ENCODE measurements at regions of chr19 and their contacts with region 1.

Region 1: DNA sequence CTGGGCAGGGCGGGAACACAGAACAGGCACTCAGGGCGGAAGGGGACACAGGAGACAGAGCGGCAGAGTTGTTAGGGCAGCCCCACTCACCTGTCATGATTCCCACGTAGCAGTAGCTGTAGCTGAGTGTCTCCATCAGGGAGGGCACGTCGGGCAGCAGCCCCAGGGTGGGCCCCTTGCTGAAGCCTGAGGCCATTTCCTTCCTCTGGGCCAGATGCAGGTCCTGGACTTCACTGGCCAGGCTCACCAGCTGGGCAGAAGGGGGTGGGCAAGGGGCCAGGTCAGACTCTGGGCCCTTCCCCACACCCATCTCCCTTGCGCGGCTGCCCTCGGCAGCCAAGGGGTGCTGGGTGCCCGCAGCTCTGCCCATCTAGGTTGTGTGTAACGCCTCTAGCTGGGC is 5.9 kb downstream of the MBOAT7 start:
- DNase-seq: no peak
- ATAC-seq: no peak
- H3K4me3 Mint-ChIP-seq: no peak overlapping the region
- H3K27ac Mint-ChIP-seq: no peak overlapping the region
- H3K4me1 Mint-ChIP-seq: peaks cover 12% of the 10 kb centered on the region
- H3K27me3 Mint-ChIP-seq: no peaks in the 10 kb centered on the region
- CTCF ChIP-seq: no peak

Region 2: DNA sequence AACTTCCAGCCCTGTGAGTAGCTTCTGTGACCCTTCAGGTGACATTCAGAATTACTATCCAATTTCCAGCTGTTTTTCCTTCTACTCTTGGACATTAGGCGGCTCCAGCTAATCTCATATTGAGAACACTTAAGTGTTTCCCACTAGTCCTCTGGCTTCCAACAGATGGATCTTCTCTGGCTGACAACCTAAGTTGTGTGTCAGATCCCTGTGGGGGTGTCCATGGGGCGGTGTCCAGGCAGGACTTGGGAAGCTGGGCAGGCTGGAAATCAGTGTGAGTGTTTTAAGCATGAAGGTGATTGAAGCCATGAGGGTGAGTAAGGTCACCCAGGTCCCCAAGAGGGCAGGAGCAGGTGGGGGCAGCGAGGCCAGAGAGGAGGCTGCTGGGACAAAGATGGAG is 35.8 kb before region 1 on chr19:
- CTCF ChIA-PET with region 1: no interaction called
- POLR2A ChIA-PET with region 1: no interaction called
- intact Hi-C with region 1: no loop called
- DNase-seq: no peak
- ATAC-seq: no peak
- H3K4me3 Mint-ChIP-seq: no peak overlapping the region
- H3K27ac Mint-ChIP-seq: no peak overlapping the region
- H3K4me1 Mint-ChIP-seq: peaks cover 1% of the 10 kb centered on the region
- H3K27me3 Mint-ChIP-seq: no peaks in the 10 kb centered on the region
- CTCF ChIP-seq: no peak

Region 3: DNA sequence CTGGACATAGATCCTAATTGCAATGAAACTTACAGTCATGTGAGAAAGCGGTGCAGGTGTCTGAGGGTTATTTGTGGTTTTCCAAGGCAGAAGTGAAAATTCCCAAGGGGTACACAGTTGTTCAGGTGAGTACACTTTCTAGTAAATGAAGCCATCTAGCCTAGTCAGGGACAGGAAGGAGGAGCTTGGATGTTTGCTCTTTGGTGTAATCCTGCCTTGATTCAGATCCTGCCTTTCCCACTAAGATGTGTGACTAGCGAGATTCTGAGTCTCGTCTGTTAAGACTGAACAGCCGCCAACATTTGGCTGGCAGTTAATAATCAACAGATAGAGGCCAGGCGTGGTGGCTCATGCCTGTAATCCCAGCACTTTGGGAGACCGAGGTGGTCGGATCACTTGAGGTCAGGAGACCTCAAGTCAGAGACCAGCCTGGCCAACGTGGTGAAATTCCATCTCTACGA is 19.8 kb after region 1 on chr19:
- CTCF ChIA-PET with region 1: no interaction called
- POLR2A ChIA-PET with region 1: interaction called, 244 read pairs
- intact Hi-C with region 1: no loop called
- DNase-seq: no peak
- ATAC-seq: no peak
- H3K4me3 Mint-ChIP-seq: peak overlapping the region; percentile 100
- H3K27ac Mint-ChIP-seq: peak overlapping the region; percentile 24
- H3K4me1 Mint-ChIP-seq: peaks cover 82% of the 10 kb centered on the region
- H3K27me3 Mint-ChIP-seq: no peaks in the 10 kb centered on the region
- CTCF ChIP-seq: no peak

Measured in activated B cell treated with CpG ODN at 0.5 μM for 24 hours (primary cell).